Motor neuron (in vitro differentiated cells): ENCODE measurements at regions of chr5 and their contacts with region 1.

Region 1: DNA sequence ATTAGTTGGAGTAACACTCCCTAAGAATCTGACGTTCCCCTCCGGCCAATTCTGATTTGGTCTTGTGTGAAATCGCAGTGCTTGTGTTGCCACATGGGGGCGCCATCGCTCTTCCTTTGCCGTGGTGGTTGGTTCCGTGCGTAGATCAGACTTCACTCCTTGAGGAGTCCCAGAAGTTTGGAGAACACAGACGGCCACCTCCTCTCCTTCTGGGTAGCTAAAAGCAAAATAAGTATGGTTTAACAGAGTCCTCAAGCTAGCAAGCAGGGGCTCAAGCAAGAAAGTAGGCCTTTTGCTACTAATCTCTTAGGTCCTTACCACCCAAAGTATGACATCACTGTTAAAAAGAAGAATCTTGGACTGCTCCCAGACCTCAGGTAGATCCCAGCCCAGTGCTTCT is 59.5 kb downstream of the HSPA4 start:
- ATAC-seq: peak; percentile 67 to 89 (median 81)
- H3K4me3 ChIP-seq: no peak overlapping the region
- H3K27ac ChIP-seq: no peak overlapping the region
- H3K4me1 ChIP-seq: no peaks in the 10 kb centered on the region

Region 2: GRCh38 chr5:133247881-133248624 is 136.8 kb after region 1 on chr5:
- in situ Hi-C with region 1: loop called in 2 of 9 experiments (anchors 5 to 25 kb)
- ATAC-seq: peak in 7 of 8 experiments; percentile 16 to 79 (median 38)
- H3K4me3 ChIP-seq: no peak overlapping the region
- H3K27ac ChIP-seq: no peak overlapping the region
- H3K4me1 ChIP-seq: peaks cover 4 to 8% of the 10 kb centered on the region in 2 donors

Region 3: DNA sequence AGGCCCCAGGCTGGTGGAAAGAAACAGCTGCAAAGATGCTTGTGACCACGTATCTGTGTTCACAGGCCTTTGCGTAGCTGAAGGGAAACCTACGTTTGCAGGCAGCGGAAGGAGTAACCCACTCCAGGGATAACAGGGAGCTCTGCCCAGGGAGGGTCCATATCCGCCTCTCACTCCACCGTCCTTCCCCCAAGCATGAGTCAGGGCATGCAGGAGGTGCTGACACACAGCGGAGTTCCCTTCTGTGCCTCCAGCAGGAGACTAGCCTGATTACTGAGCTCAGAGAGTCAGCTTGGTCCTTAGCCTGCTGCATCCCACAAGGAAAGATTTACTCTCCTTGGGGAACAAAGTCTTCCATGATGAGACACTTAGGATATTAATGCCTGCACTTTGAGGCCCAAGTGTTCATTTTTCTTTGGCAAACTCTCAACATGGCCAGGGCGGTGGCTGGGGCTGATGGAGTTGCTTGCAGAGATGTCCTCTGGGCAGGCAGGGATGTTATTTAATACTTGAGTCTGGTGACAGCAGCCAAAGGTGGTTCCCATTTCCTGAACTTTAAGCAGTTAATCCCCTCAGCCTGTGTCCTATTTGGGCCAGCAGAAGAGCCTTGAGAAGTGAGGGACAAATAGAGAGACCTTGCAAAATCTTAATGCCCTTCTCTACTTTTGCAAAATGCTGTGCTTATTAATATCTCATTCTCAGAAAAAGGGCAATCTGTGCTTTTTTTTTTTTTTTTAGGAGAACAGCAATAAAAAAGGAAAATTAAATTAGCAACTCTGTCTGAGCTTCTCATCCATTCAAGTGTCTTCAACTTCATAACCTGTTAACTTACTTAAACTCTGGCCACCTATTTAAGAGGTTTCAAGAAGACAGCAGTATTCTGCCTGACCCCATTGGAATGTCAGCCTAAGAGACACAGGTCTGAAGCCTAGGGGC is 162.6 kb after region 1 on chr5:
- in situ Hi-C with region 1: loop called in 2 of 9 experiments (anchors 25 kb)
- ATAC-seq: peak; percentile 71 to 99 (median 94)
- H3K4me3 ChIP-seq: no peak overlapping the region
- H3K27ac ChIP-seq: no peak overlapping the region
- H3K4me1 ChIP-seq: peaks cover 0 to 46% of the 10 kb centered on the region in 2 donors

Region 4: DNA sequence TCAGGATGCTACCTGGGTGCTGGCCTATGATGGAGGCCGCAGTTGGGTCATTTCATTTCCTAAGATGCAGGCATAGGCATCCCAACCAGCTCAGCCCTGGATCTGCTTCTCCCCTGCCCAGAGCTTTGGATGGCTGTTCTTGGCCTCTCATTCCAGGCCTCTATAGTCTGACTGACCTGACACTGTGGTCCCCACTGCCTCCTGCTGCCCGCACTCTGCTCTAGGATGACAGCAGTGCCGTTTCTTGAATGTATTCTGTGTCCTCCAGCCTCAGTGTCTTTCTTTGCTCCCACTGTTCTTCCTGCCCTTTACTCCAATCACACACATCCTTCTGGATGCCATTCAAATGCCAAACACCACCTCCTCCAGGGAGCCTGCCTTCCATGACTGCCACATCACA is 176.2 kb after region 1 on chr5:
- in situ Hi-C with region 1: loop called in 1 of 9 experiments (anchors 25 kb)
- ATAC-seq: peak in 7 of 8 experiments; percentile 5 to 72 (median 64)
- H3K4me3 ChIP-seq: no peak overlapping the region
- H3K27ac ChIP-seq: no peak overlapping the region
- H3K4me1 ChIP-seq: peaks cover 0 to 12% of the 10 kb centered on the region in 2 donors

Region 5: GRCh38 chr5:133944263-133945185 is 833.2 kb after region 1 on chr5:
- in situ Hi-C with region 1: loop called in 2 of 9 experiments (anchors 25 kb)
- ATAC-seq: peak in 7 of 8 experiments; percentile 27 to 88 (median 45)
- H3K4me3 ChIP-seq: no peak overlapping the region
- H3K27ac ChIP-seq: no peak overlapping the region
- H3K4me1 ChIP-seq: no peaks in the 10 kb centered on the region

Region 6: DNA sequence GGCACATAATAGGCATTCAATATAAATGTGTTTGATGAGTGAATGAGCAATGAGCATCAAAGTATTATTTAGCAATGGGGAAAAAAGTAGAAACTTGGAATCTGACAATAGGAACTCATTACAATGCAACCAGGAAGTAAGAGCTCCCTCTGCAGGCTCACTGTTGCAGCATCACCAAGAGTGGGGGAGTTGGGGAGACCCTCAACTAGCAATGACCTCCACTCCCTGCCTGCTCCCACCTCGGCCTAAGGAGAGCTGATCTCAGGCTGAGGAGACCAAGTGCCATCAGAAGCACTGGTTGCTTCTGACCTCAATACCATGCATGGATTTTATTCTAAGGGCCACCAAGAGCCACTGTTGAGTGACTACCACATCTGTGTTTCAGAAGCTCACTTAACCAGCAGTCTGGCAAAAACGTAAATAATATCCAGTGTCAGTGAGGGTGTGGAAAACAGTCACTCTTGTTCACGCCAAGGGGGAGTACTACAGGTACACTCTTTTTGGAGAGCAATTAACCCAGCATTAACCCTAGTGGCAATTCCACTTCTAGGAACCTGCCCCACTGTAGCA is 885.5 kb after region 1 on chr5:
- in situ Hi-C with region 1: loop called in 1 of 9 experiments (anchors 25 kb)
- ATAC-seq: peak in 3 of 8 experiments; percentile 19 to 35 (median 34)
- H3K4me3 ChIP-seq: no peak overlapping the region
- H3K27ac ChIP-seq: no peak overlapping the region
- H3K4me1 ChIP-seq: peaks cover 25 to 29% of the 10 kb centered on the region in 2 donors